ENCODE measurements at regions of chr5 and their contacts with region 1.

Region 1: GRCh38 chr5:172714491-172715421 is 56.2 kb downstream of the DUSP1 start:
- DNase-seq: peak; percentile 91

Region 2: GRCh38 chr5:172683696-172684471 is 30.9 kb before region 1 on chr5:
- intact Hi-C with region 1: no loop called
- DNase-seq: no peak

Region 3: GRCh38 chr5:172858990-172859811 is 144.4 kb after region 1 on chr5:
- intact Hi-C with region 1: loop called (anchors 5 kb)
- DNase-seq: peak; percentile 82

Region 4: GRCh38 chr5:172902497-172903200 is 187.9 kb after region 1 on chr5:
- intact Hi-C with region 1: loop called (anchors 2 kb)
- DNase-seq: peak; percentile 87

Region 5: GRCh38 chr5:172932313-172933017 is 217.7 kb after region 1 on chr5:
- intact Hi-C with region 1: loop called (anchors 1 kb)
- DNase-seq: peak; percentile 91

Region 6: DNA sequence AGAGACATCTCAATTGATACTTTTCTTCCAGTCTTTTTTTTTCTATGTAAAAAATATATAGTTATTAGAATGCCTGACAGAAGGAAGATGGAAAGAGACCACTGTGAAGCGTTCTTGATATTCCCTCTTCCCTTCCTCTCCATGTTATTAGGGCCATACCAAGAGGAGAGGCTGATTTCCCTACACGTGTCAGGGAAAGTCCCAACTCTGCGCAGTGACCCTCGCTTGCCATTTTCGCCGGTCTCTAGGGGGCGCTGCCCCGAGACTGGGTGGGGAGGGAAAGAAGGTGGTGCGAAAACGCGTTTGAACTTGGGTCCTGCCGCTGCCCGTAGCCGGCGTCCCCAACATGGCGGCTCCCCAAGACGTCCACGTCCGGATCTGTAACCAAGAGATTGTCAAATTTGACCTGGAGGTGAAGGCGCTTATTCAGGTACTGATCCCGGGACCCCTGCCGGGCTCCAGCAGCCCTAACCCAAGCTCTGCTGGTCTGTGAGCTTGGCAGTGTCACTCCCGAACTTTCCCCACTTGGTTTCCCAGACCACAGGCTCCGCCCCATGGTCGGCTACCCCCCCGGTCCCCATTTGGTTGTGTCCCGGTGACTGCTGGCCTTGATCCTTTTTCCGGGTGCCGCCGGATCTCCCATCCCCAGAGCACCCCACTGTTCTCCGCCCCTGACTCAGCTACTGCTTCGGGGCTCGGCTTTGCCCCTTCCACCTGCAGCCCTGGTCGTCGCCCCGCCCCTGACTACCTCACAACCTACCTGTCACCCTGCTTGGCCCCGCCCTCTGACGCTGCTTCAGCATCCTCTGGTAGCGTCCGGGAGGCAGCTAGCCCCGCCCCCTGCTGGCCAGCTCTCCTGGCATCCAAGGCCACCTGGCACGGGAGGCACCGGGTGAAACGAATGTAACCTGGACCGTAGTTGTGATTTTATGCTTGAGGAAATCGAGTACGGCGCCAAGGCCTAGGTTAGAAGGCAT is 429.7 kb after region 1 on chr5 and contains the start of gene BNIP1:
- intact Hi-C with region 1: loop called (anchors 10 kb)
- DNase-seq: peak; percentile 95
- total RNA-seq, gene BNIP1: 11.1 TPM

Measured in cardiac septum (tissue), 1 donor.